ENCODE measurements at regions of chr1 and their contacts with region 1.

Region 1: GRCh38 chr1:27097484-27097917 is 57.4 kb downstream of the SLC9A1 start:
- DNase-seq: no peak
- H3K4me3 ChIP-seq: no peak overlapping the region
- H3K27ac ChIP-seq: peak overlapping the region; percentile 83 to 88 (median 86)
- H3K4me1 ChIP-seq: peaks cover 27 to 39% (median 27%) of the 10 kb centered on the region in 3 donors
- H3K27me3 ChIP-seq: no peaks in the 10 kb centered on the region
- CTCF ChIP-seq: peak; percentile 94 to 99 (median 98)
- POLR2A ChIP-seq: no peak

Region 2: GRCh38 chr1:26993237-26994019 is 104.1 kb before region 1 on chr1 and contains the start of gene TRNP1:
- intact Hi-C with region 1: loop called (anchors 10 kb)
- DNase-seq: no peak
- H3K4me3 ChIP-seq: peak within 1 kb of the TSS; percentile 62 to 90 (median 81)
- H3K27ac ChIP-seq: peak within 1 kb of the TSS; percentile 81 to 93 (median 88)
- H3K4me1 ChIP-seq: peaks cover 36 to 56% (median 41%) of the 10 kb centered on the region in 3 donors
- H3K27me3 ChIP-seq: peaks cover 0 to 54% (median 0%) of the 10 kb centered on the region in 4 donors
- CTCF ChIP-seq: no peak
- POLR2A ChIP-seq: peak in 2 of 4 donors; percentile 73 to 83
- total RNA-seq, gene TRNP1: 26.9 to 208 (median 64.5) TPM

Region 3: GRCh38 chr1:27049607-27050006 is 47.9 kb before region 1 on chr1:
- intact Hi-C with region 1: loop called (anchors 2 kb)
- DNase-seq: no peak
- H3K4me3 ChIP-seq: no peak overlapping the region
- H3K27ac ChIP-seq: no peak overlapping the region
- H3K4me1 ChIP-seq: peaks cover 0 to 20% (median 5%) of the 10 kb centered on the region in 3 donors
- H3K27me3 ChIP-seq: no peaks in the 10 kb centered on the region
- CTCF ChIP-seq: no peak
- POLR2A ChIP-seq: no peak